ENCODE measurements at regions of chr19 and their contacts with region 1.

Region 1: DNA sequence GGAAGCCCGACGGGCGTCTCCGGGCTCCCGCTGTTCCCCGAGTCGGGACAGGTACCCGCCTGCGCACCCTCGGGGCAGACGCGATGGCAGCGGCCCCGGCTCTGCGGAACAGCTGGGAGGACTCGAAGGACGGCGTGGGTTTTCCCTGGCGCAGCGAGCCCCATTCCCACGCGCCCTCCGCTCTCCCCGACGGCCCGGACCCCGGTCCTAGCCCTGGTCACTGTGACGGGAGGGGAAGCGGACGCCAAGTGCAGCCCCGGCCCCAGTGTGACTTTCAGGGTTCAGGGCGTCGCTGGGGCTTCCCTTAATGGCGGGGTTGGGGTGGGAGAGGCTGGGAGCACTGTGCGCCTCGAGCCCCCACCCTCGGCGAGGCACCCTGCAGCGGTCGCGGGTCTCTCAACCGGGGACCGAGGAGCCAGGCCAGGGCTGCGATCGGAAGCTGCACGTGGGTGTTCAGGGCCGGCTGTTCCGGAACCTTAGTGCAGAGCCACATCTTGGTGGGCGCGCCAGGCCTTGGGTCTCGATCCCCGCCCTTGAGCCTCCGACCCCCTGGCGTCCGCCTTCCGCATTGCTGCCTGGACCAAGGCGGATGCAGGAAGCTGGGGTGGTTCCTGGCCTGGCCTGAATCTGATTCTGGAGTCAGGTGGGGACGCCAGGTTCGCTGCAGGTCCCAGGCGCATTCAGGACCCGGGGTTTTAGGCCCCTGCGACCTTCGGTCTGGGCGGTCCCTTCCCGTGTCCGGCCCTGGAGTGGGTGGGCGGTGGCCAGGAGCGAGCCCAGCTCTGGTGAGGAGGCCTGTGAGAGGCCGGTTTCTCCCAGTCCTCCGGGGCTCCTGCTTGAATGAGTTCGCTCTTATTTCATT is 3.5 kb downstream of the LGALS7B start:
- DNase-seq: peak in 1 of 5 donors; percentile 62
- H3K4me3 ChIP-seq: peak overlapping the region; percentile 18
- H3K27ac ChIP-seq: no peak overlapping the region
- H3K4me1 ChIP-seq: no peaks in the 10 kb centered on the region
- H3K27me3 ChIP-seq: no peaks in the 10 kb centered on the region
- CTCF ChIP-seq: no peak
- EP300 ChIP-seq: no peak
- POLR2A ChIP-seq: no peak

Region 2: DNA sequence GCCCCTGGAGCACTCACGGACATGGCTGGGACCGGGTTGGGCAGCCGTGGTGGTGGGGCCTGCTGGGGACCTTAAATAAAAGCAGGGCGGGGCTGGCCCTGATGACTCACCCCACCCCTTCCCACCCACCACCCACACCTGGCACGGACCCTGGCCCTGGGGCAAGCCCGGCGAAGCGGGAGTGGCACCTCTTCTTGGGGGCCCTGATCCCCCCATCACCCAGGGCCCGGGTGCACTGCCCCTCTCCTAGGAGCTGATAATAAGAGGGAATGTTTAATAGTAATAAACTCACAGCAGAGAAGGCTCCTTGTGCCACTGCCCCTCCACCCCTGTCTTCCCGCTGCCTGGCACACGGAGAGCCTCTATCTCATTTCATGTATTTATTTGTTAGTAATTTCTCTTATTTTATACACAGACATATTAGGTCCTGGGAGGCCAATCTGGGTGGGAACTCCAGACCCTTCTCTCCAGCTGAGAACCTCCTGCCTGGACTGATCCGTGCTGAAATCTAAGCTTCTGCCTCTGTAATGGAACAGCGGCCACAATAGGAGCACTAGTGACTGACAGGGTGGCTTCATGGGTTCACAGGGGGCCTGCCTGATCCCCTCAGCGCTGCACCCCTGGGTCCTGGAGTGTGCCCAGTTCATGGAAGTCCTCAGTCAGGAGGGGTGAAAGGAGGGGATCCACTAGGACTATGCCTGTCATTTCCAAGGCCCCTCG is 18.9 kb before region 1 on chr19 and contains the start of gene LGALS7:
- intact Hi-C with region 1: loop called in 1 of 4 experiments (anchors 2 kb)
- DNase-seq: no peak
- H3K4me3 ChIP-seq: no peak within 1 kb of the TSS
- H3K27ac ChIP-seq: no peak within 1 kb of the TSS
- H3K4me1 ChIP-seq: peaks cover 5% of the 10 kb centered on the region
- H3K27me3 ChIP-seq: no peaks in the 10 kb centered on the region
- CTCF ChIP-seq: no peak
- EP300 ChIP-seq: no peak
- POLR2A ChIP-seq: no peak
- total RNA-seq, gene LGALS7: 0.69 to 0.79 TPM in 2 of 7 donors, not detected in the others

Region 3: DNA sequence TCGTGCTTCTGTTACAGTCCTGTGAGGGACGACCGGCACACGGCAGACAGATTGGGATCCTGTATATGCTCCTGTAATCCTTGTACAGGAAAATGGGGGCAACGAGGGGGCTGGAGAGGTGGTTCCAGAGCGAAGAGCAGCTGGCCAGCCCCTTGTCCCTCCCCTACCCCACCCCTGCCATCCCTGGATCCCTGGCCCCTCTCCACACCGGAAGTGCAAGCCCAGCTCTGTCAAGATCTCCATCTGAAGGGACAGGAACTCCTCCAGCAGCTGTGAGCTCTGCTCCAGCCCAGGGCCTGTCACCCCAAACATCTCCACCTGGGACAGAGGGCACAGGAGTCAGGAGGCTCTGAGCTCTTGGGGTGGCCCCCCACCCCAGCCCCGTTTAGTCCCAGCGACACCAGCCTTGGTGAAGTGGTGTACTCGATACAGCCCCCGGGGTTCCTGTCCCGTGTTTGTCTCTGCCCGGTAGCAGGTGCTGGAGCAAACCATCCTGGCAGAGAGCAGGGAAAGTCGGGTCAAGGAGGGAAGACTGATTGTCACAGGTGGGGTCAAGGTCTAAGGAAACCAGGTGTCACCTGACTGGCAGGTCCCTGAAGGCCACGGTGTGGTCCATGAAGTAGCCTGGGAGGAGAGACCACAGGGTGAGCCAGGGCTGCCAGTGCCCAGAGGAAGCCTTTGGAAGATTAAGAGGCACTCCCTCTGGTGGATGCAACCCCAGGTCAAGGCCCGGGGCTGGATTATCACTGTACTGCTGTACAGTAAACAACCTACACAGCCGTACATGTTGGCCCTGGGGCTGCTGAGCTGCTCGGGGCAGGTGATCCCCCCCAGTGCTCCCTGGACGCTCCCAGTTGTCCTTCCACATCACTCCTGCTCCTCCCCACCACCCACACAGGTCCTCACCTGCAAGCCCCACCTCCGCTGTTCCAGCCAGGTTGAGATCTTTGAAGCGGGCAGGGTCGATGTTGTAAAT is 125.3 kb after region 1 on chr19:
- intact Hi-C with region 1: no loop called
- DNase-seq: peak in 1 of 5 donors; percentile 36
- H3K4me3 ChIP-seq: no peak overlapping the region
- H3K27ac ChIP-seq: no peak overlapping the region
- H3K4me1 ChIP-seq: no peaks in the 10 kb centered on the region
- H3K27me3 ChIP-seq: no peaks in the 10 kb centered on the region
- CTCF ChIP-seq: no peak
- EP300 ChIP-seq: no peak
- POLR2A ChIP-seq: no peak